A549 (cell line): ENCODE measurements at regions of chr14 and their contacts with region 1.

Region 1: DNA sequence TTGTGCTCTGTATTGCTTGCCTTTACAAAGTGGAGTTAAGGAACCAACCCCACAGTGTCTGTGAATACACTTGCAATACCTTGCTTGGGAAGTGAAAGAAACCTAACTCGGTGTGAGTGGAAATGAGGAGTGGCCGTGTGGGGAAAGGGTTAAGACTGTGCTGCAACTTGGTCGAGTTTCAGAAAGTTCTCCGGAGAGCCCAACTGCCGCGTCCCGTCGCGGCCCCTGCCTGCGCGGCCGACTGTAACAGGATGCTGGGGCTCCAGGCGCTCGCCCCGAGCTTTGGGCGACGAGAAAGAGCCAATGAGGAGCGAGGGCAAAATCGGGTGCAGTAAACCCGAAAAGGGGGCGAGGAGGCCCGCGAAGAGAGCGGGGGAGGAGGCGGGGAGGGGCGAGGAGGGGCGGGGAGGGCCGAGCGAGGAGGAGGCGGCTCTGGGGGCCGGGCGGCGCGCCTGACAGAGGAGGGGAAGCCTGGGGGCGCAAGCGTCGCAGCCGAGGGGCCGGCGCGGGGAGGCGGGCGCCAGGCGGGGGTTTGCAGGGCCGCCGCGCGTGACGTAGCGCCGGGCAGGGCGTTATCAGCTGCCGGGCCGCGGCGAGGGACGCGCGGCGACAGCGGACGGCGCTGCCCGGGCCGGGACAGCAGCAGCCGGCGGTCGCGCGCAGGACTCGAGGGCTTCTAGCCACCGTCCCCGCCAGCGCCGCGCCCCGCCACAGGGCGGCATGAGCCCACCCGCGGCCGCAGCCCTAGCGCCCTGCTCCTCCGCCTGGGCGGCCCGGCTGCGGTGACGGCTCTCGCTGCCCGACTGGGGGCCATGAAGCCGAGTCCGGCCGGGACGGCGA is at the start of gene DACT1:
- DNase-seq: peak; percentile 16 to 35
- ATAC-seq: peak; percentile 61 to 71
- H3K4me3 ChIP-seq: peak within 1 kb of the TSS; percentile 77
- H3K27ac ChIP-seq: peak within 1 kb of the TSS; percentile 62 to 83; a peak in 5 of 6 replicates
- H3K4me1 ChIP-seq: peaks cover 3% of the 10 kb centered on the region; the same call in 1 of the 3 replicates
- CTCF ChIP-seq: 0 out of 3 replicates have a peak, but pooled peaks have one; percentile 7
- EP300 ChIP-seq: no peak
- POLR2A ChIP-seq: no peak
- RAD21 ChIP-seq: no peak
- polyA plus RNA-seq, gene DACT1: 0.37 and 0.45 TPM in 2 replicates

Region 2: DNA sequence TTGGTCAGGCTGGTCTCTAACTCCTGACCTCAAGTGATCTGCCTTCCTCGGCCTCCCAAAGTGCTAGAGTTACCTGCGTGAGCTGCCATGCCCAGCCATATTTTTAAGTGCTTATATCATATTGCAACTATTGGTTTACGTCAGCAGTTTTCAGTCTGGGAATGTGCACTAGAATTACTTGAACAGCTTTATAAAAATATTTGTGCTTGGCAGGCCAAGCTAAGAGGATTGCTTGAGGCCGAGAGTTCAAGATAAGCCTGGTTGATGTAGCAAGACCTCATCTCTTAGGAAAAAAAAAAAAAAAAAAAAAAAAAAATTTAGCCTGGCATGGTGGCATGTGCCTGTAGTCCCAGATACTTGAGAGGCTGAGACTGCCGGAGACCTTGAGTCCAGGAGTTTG is 193.0 kb before region 1 on chr14:
- CTCF ChIA-PET with region 1: no interaction called
- POLR2A ChIA-PET with region 1: no interaction called
- DNase-seq: no peak
- ATAC-seq: no peak
- H3K4me3 ChIP-seq: no peak overlapping the region
- H3K27ac ChIP-seq: no peak overlapping the region
- H3K4me1 ChIP-seq: peaks cover 5% of the 10 kb centered on the region; the same call in 1 of the 3 replicates
- CTCF ChIP-seq: no peak
- EP300 ChIP-seq: no peak
- POLR2A ChIP-seq: no peak
- RAD21 ChIP-seq: no peak

Region 3: GRCh38 chr14:58501214-58501816 is 136.3 kb before region 1 on chr14:
- CTCF ChIA-PET with region 1: interaction called, 78 read pairs
- POLR2A ChIA-PET with region 1: interaction called, 23 read pairs
- DNase-seq: peak; percentile 21 to 80
- ATAC-seq: peak; percentile 86 to 90; a peak in 4 of 6 replicates
- H3K4me3 ChIP-seq: no peak overlapping the region
- H3K27ac ChIP-seq: no peak overlapping the region
- H3K4me1 ChIP-seq: no peaks in the 10 kb centered on the region
- CTCF ChIP-seq: peak; percentile 90
- EP300 ChIP-seq: no peak
- POLR2A ChIP-seq: no peak
- RAD21 ChIP-seq: peak; percentile 84 to 88

Region 4: DNA sequence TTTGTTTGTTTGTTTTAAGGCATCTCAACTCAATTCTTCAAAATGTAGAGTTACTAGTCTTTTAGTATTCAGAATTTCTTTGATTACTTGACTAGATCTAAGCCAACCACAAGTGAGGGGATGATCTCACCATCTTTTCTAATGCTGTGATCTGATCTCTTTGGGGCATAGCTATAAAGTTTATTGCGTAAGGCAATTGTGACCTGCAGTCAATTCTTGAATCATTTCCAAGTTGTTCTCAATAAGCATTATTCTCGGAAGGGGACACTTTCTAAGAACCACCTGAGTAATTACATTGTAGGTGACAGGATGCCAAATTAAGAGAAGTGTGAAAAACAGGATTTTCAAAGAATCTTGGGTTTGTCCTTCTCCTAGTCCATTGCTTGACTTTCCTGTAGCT is 13.2 kb after region 1 on chr14:
- CTCF ChIA-PET with region 1: interaction called, 20 read pairs
- POLR2A ChIA-PET with region 1: no interaction called
- DNase-seq: no peak
- ATAC-seq: no peak
- H3K4me3 ChIP-seq: no peak overlapping the region
- H3K27ac ChIP-seq: no peak overlapping the region
- H3K4me1 ChIP-seq: no peaks in the 10 kb centered on the region
- CTCF ChIP-seq: no peak
- EP300 ChIP-seq: no peak
- POLR2A ChIP-seq: no peak
- RAD21 ChIP-seq: no peak

Region 5: GRCh38 chr14:59004012-59004411 is 366.4 kb after region 1 on chr14:
- CTCF ChIA-PET with region 1: interaction called, 14 read pairs
- POLR2A ChIA-PET with region 1: no interaction called
- DNase-seq: no peak
- ATAC-seq: no peak
- H3K4me3 ChIP-seq: no peak overlapping the region
- H3K27ac ChIP-seq: no peak overlapping the region
- H3K4me1 ChIP-seq: no peaks in the 10 kb centered on the region
- CTCF ChIP-seq: no peak
- EP300 ChIP-seq: no peak
- POLR2A ChIP-seq: no peak
- RAD21 ChIP-seq: peak; percentile 11 to 20; a peak in 3 of 5 replicates

Region 6: DNA sequence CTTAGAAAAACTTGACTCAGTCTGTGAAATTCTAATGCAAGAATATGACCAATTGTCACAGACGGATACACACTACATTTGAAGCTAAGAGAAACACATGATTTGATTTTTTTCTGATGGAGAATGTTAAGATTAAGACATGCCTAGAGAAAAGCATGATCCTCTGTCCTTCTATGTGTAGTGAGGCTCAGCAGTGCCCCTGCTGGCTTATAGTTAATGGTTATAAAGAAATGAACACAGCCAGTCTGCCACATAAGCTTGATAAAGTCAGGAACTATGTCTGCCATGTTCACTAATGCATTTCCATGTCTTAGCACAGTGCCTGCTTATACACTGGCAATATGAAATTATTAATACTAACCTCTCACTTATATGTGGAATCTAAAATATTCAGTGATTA is 382.8 kb after region 1 on chr14:
- CTCF ChIA-PET with region 1: interaction called, 12 read pairs
- POLR2A ChIA-PET with region 1: no interaction called
- DNase-seq: peak in 1 of 2 experiments; percentile 48
- ATAC-seq: peak; percentile 74 to 87; a peak in 5 of 6 replicates
- H3K4me3 ChIP-seq: no peak overlapping the region
- H3K27ac ChIP-seq: no peak overlapping the region
- H3K4me1 ChIP-seq: no peaks in the 10 kb centered on the region
- CTCF ChIP-seq: peak; percentile 31; the same call in 2 of the 3 replicates
- EP300 ChIP-seq: no peak
- POLR2A ChIP-seq: no peak
- RAD21 ChIP-seq: peak; percentile 39 to 40; a peak in 4 of 5 replicates

Region 7: GRCh38 chr14:59028476-59029202 is 391.0 kb after region 1 on chr14:
- CTCF ChIA-PET with region 1: interaction called, 20 read pairs
- POLR2A ChIA-PET with region 1: no interaction called
- DNase-seq: peak; percentile 37 to 68
- ATAC-seq: peak; percentile 97 to 100
- H3K4me3 ChIP-seq: no peak overlapping the region
- H3K27ac ChIP-seq: no peak overlapping the region
- H3K4me1 ChIP-seq: peaks cover 5% of the 10 kb centered on the region; the same call in 1 of the 3 replicates
- CTCF ChIP-seq: peak; percentile 90
- EP300 ChIP-seq: no peak
- POLR2A ChIP-seq: no peak
- RAD21 ChIP-seq: peak; percentile 88 to 89

Region 8: DNA sequence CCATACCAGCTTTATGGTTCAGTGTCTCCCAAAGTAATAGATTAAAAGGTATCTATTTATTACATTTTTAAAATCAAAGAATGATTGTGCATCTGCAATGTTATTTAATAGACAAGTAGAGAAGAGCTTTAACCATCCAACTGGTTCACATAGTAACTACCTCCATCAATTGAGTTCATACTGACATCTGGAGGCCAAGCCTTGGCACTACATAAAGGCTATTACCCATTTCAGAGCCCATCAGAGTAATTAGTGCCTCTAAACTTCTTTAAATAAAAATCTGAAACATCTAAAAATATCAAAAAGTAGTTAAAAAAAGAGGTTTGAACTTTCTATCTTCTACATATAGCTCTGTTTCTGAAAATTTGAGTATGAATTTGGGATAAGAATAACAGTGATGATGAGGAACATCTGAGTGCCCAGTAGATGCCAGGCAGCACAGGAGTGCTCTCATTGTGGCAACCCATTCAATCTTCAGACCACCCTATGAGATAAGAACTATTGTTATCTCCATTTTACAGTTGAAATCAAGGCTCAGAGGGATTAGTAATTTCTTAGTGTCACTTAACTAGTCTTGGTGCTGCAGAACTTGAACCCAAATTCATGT is 417.9 kb after region 1 on chr14:
- CTCF ChIA-PET with region 1: interaction called, 12 read pairs
- POLR2A ChIA-PET with region 1: interaction called, 3 read pairs
- DNase-seq: peak; percentile 21 to 28
- ATAC-seq: peak; percentile 59 to 80; a peak in 4 of 6 replicates
- H3K4me3 ChIP-seq: no peak overlapping the region
- H3K27ac ChIP-seq: no peak overlapping the region
- H3K4me1 ChIP-seq: no peaks in the 10 kb centered on the region
- CTCF ChIP-seq: peak; percentile 63
- EP300 ChIP-seq: no peak
- POLR2A ChIP-seq: no peak
- RAD21 ChIP-seq: peak; percentile 66 to 70